Naive thymus-derived CD4-positive, alpha-beta T cell (primary cell): ENCODE measurements at regions of chr6 and their contacts with region 1.

Region 1: DNA sequence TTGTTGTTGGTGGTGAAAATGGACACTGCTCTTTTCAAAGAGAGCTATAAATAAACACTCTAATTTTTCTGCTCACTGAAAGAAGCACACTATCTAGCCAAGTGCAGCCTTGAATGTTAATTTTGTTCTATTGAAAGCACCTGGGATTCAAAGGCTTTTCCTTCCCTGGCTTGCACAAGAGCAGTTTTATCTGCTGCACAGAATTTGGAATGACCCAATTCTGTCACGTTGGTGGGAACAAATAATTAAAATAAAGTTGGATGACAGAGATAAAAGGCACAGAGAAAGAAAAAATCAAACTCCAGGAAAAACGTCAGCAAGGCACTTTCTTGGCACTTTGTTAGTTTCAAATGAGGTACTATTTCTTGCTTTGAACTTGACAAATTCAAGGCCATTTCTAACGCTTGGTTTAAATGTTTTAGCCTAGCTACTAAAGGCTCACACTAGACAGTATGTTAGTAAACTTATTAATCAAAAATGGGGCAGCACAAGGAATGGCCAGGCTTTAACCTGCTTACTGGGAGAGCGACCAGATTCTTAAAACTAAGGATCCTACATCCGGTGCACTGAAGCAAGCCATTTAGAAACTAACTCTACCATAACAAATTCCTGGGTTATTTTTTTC is 145.5 kb upstream of the ARG1 start:
- DNase-seq: no peak
- ATAC-seq: no peak
- H3K4me3 ChIP-seq: no peak overlapping the region
- H3K4me3 Mint-ChIP-seq: peak overlapping the region in 5 of 10 donors; percentile 14 to 83 (median 68)
- H3K27ac ChIP-seq: no peak overlapping the region
- H3K27ac Mint-ChIP-seq: peak overlapping the region in 3 of 9 donors; percentile 31 to 77 (median 61)
- H3K4me1 ChIP-seq: peaks cover 0 to 6% of the 10 kb centered on the region in 2 donors
- H3K4me1 Mint-ChIP-seq: peaks cover 10 to 59% (median 27%) of the 10 kb centered on the region in 7 donors
- H3K27me3 ChIP-seq: no peaks in the 10 kb centered on the region
- H3K27me3 Mint-ChIP-seq: no peaks in the 10 kb centered on the region

Region 2: DNA sequence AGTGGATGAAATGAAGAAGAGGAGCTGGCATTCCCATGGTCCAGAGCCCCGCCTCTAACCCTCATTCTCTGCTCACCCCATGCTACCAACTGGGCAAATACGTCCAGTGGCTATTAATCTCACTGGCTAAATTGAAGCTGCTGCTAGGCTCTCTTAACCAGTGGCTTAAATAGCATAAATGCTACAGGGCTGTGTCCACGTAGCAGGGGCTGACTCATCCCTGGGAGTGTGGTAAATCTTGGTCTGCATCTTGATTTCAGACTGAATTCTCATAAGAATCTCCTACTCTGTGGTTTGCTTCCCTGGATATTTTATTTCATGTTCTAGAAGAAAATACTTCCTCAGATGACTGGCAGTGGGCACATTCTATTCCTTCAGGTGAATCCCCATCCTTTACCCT is 47.6 kb before region 1 on chr6:
- CTCF ChIA-PET with region 1: interaction called, 3 read pairs
- POLR2A ChIA-PET with region 1: no interaction called
- intact Hi-C with region 1: loop called in 1 of 2 experiments (anchors 5 kb)
- DNase-seq: no peak
- ATAC-seq: no peak
- H3K4me3 ChIP-seq: no peak overlapping the region
- H3K4me3 Mint-ChIP-seq: no peak overlapping the region
- H3K27ac ChIP-seq: no peak overlapping the region
- H3K27ac Mint-ChIP-seq: no peak overlapping the region
- H3K4me1 ChIP-seq: no peaks in the 10 kb centered on the region
- H3K4me1 Mint-ChIP-seq: peaks cover 2 to 24% (median 11%) of the 10 kb centered on the region in 7 donors
- H3K27me3 ChIP-seq: no peaks in the 10 kb centered on the region
- H3K27me3 Mint-ChIP-seq: no peaks in the 10 kb centered on the region